ENCODE measurements at regions of chr16 and their contacts with region 1.

Region 1: GRCh38 chr16:50210266-50211038 is 55.9 kb upstream of the ADCY7 start:
- DNase-seq: peak; percentile 51
- ATAC-seq: peak; percentile 95
- H3K4me3 ChIP-seq: no peak overlapping the region
- H3K27ac ChIP-seq: no peak overlapping the region
- H3K4me1 ChIP-seq: peaks cover 0 to 15% of the 10 kb centered on the region in 2 experiments; a peak in 2 of 4 replicates
- H3K27me3 ChIP-seq: no peaks in the 10 kb centered on the region
- CTCF ChIP-seq: peak; percentile 68 to 85 (median 72)
- POLR2A ChIP-seq: no peak
- RAD21 ChIP-seq: peak; percentile 82

Region 2: DNA sequence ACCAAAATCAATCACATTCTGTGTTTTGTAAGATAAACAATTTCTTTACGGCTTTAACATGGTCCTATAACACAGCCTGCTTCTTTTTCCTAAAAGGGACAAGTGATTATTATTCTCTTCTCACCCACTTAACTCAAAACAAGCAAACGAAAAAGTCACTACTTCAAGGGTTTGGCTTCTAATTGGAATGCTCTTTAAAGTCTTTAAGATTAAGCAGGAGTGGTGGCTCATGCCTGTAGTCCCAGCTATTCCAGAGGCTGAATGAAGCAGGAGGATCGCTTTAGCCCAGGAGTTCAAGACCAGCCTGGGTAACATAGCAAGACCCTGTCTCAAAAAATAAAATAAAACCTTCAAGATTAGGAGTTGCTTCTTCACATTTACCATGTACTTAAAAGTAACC is 252.0 kb before region 1 on chr16:
- CTCF ChIA-PET with region 1: interaction called, 16 read pairs
- POLR2A ChIA-PET with region 1: no interaction called
- RAD21 ChIA-PET with region 1: interaction called, 3 to 5 read pairs
- intact Hi-C with region 1: no loop called
- DNase-seq: no peak
- ATAC-seq: no peak
- H3K4me3 ChIP-seq: no peak overlapping the region
- H3K27ac ChIP-seq: no peak overlapping the region
- H3K4me1 ChIP-seq: peaks cover 0 to 4% of the 10 kb centered on the region in 2 experiments; a peak in 2 of 4 replicates
- H3K27me3 ChIP-seq: no peaks in the 10 kb centered on the region
- CTCF ChIP-seq: no peak
- POLR2A ChIP-seq: no peak
- RAD21 ChIP-seq: no peak

Region 3: GRCh38 chr16:50024684-50025536 is 185.5 kb before region 1 on chr16 and contains the start of gene CNEP1R1:
- CTCF ChIA-PET with region 1: interaction called, 65 read pairs
- POLR2A ChIA-PET with region 1: no interaction called
- RAD21 ChIA-PET with region 1: interaction called, 5 to 9 read pairs
- intact Hi-C with region 1: loop called (anchors 2 kb)
- DNase-seq: peak; percentile 96
- ATAC-seq: peak; percentile 91
- H3K4me3 ChIP-seq: peak within 1 kb of the TSS; percentile 94 to 97
- H3K27ac ChIP-seq: peak within 1 kb of the TSS; percentile 45
- H3K4me1 ChIP-seq: peaks cover 4 to 15% of the 10 kb centered on the region in 2 experiments; a peak in 2 of 4 replicates
- H3K27me3 ChIP-seq: no peaks in the 10 kb centered on the region
- CTCF ChIP-seq: peak; percentile 96 to 99 (median 99)
- POLR2A ChIP-seq: peak; percentile 52
- RAD21 ChIP-seq: peak; percentile 93
- total RNA-seq, gene CNEP1R1: 14.6 TPM

Region 4: DNA sequence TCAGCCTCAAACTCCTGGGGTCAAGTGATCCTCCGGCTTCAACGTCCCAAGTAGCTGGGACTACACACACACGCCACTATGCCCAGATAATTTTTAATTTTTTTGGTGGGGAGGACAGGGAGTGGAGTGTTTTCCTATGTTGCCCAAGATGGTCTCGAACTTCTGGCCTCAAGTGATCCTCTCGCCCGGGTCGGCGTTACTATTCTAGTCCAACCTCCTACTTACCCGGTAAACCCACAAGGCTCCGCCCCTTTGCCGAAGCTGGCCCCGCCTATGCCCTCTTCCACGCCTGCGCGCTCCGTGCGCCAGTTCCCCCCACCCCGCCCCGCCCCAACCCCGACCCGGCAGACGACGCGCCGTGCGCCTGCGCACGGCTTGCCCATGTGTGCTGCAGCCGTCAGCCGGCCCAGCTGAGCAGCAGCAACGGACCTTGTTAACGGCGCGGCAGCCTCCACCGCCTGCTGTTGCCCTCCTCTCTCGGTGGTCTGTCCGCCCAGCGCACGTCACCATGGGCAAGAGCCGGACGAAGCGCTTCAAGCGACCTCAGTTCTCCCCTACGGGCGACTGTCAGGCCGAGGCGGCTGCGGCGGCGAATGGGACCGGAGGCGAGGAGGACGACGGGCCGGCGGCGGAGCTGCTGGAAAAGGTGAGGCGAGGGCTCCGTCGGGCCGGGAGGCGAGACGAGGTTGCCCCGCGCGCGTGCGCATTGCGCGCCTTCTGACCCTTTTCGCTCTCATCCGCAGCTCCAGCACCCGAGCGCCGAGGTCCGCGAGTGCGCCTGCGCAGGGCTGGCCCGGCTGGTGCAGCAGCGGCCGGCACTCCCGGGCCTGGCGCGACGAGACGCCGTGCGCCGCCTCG is 144.6 kb before region 1 on chr16 and contains the start of gene HEATR3:
- CTCF ChIA-PET with region 1: interaction called, 24 read pairs
- POLR2A ChIA-PET with region 1: interaction called, 4 read pairs
- RAD21 ChIA-PET with region 1: interaction called, 5 to 6 read pairs
- intact Hi-C with region 1: loop called (anchors 1 kb)
- DNase-seq: peak; percentile 87
- ATAC-seq: peak; percentile 92
- H3K4me3 ChIP-seq: peak within 1 kb of the TSS; percentile 79 to 81
- H3K27ac ChIP-seq: peak within 1 kb of the TSS; percentile 84
- H3K4me1 ChIP-seq: peaks cover 0 to 14% of the 10 kb centered on the region in 2 experiments; a peak in 2 of 4 replicates
- H3K27me3 ChIP-seq: no peaks in the 10 kb centered on the region
- CTCF ChIP-seq: no peak
- POLR2A ChIP-seq: peak; percentile 70
- RAD21 ChIP-seq: no peak
- total RNA-seq, gene HEATR3: 16.3 TPM

Region 5: DNA sequence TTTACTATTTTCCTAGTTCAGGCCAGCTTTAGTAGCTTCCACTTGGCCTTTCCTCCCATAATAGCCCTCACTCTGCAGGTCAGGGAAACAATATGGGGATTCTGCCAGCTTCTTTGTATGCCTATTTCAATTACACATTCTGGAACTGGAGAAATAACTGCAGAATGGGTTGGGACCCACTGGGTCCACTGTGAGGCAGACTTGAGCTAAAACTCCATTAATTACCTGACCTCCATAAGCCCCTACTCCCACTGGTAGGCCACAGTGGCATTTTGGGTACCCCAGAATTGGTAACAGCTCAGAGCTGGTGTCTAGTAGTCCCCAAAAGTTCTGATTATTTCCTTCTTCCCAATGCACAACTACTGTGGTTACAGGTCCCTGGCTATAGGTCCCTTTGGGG is 74.1 kb before region 1 on chr16:
- CTCF ChIA-PET with region 1: interaction called, 12 read pairs
- POLR2A ChIA-PET with region 1: no interaction called
- RAD21 ChIA-PET with region 1: no interaction called
- intact Hi-C with region 1: no loop called
- DNase-seq: no peak
- ATAC-seq: no peak
- H3K4me3 ChIP-seq: no peak overlapping the region
- H3K27ac ChIP-seq: no peak overlapping the region
- H3K4me1 ChIP-seq: no peaks in the 10 kb centered on the region
- H3K27me3 ChIP-seq: no peaks in the 10 kb centered on the region
- CTCF ChIP-seq: no peak
- POLR2A ChIP-seq: no peak
- RAD21 ChIP-seq: no peak; the same call in 1 of the 2 replicates

Region 6: GRCh38 chr16:50354629-50355456 is 144.4 kb after region 1 on chr16:
- CTCF ChIA-PET with region 1: interaction called, 20 read pairs
- POLR2A ChIA-PET with region 1: no interaction called
- RAD21 ChIA-PET with region 1: no interaction called
- intact Hi-C with region 1: loop called (anchors 2 kb)
- DNase-seq: no peak
- ATAC-seq: no peak
- H3K4me3 ChIP-seq: no peak overlapping the region
- H3K27ac ChIP-seq: no peak overlapping the region
- H3K4me1 ChIP-seq: no peaks in the 10 kb centered on the region
- H3K27me3 ChIP-seq: no peaks in the 10 kb centered on the region
- CTCF ChIP-seq: peak; percentile 38 to 69 (median 51); a peak in 5 of 6 replicates
- POLR2A ChIP-seq: no peak
- RAD21 ChIP-seq: peak; percentile 34; the same call in 1 of the 2 replicates

Region 7: DNA sequence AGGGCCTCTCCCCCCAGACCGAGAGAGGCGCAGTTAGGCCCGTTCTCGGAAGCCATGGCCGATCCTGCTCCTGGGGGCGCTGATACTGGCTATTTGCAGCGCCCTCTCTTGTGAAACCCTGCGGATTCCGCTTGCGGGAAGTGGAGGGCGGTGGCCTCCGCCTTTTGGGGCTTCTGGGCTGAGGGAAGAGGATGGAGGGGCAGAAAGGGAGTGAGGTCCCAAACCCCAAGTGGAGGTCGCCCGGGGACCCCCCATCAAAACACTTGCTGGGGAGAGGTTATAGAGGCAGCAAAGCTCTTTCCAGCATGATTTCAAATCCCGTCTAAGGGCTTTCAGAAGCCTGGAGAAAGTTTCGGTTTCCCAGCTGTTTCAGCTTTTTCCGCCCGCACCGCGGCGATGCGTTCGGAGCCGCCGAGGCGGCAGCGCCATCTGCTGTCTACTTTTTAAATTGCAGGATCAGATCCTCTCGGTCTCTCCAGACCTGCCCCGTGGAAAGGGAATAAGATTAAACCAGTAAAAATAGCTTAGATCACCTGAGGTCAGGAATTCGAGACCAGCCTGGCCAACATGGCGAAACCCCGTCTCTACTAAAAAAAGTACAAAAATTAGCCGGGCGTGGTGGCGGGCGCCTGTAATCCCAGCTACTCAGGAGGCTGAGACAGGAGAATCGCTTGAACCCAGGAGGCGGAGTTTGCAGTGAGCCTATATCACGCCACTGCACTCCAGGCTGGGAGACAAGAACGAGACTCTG is 454.9 kb after region 1 on chr16:
- CTCF ChIA-PET with region 1: interaction called, 11 read pairs
- POLR2A ChIA-PET with region 1: no interaction called
- RAD21 ChIA-PET with region 1: no interaction called
- intact Hi-C with region 1: loop called (anchors 5 kb)
- DNase-seq: peak; percentile 41
- ATAC-seq: peak; percentile 93
- H3K4me3 ChIP-seq: peak overlapping the region; percentile 35 to 48
- H3K27ac ChIP-seq: no peak overlapping the region; the same call in 1 of the 2 replicates
- H3K4me1 ChIP-seq: peaks cover 0 to 5% of the 10 kb centered on the region in 2 experiments; a peak in 1 of 4 replicates
- H3K27me3 ChIP-seq: no peaks in the 10 kb centered on the region
- CTCF ChIP-seq: peak; percentile 78 to 90 (median 81)
- POLR2A ChIP-seq: no peak
- RAD21 ChIP-seq: peak; percentile 93

Measured in HCT116 (cell line).